PC-9 (cell line): ENCODE measurements at regions of chr2 and their contacts with region 1.

Region 1: DNA sequence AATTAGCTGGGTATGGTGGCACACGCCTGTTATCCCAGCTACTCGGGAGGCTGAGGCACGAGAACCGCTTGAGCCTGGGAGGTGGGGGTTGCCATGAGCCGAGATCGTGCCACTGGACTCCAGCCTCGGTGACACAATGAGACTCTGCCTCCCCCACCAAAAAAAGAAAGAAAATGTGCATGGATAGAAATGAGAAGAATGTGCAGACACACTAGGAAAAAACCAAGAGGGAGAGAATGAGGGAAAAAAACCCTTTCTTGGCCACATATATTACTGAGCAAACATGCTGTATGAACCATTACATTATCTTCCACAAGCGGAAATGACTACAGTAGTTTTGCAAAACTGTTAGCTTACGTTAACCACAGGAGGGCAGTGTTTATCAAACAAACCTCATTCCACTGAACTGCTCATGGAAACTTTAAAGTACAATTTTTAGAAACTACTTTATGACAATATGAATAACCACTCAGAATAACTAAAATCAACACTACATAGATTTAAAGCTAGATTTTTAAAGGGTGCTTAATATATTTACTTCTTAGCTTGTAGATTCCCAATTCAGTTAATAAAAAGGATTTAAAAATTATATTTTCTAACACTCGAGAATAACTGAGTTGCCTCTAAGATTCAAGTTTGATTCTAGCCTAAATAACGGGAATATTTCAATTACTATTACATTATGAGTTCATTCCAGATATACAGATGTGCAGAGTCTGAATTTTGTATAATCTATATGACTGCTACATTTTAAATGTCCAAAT is 26.4 kb downstream of the ASXL2 start:
- DNase-seq: peak; percentile 22 to 75
- H3K4me3 ChIP-seq: no peak overlapping the region
- H3K27ac ChIP-seq: peak overlapping the region; percentile 5; the same call in 1 of the 2 replicates
- H3K4me1 ChIP-seq: peaks cover 11% of the 10 kb centered on the region
- H3K27me3 ChIP-seq: no peaks in the 10 kb centered on the region
- CTCF ChIP-seq: peak; percentile 85

Region 2: GRCh38 chr2:24702800-24703199 is 1149.1 kb before region 1 on chr2:
- CTCF ChIA-PET with region 1: interaction called, 17 read pairs
- POLR2A ChIA-PET with region 1: no interaction called
- intact Hi-C with region 1: no loop called
- DNase-seq: peak in 1 of 2 experiments; percentile 86
- H3K4me3 ChIP-seq: no peak overlapping the region
- H3K27ac ChIP-seq: peak overlapping the region; percentile 35
- H3K4me1 ChIP-seq: peaks cover 16% of the 10 kb centered on the region
- H3K27me3 ChIP-seq: no peaks in the 10 kb centered on the region
- CTCF ChIP-seq: no peak